Activated CD4-positive, alpha-beta memory T cell treated with anti-CD3 and anti-CD28 coated beads for 36 hours (primary cell): ENCODE measurements at regions of chr1 and their contacts with region 1.

Region 1: DNA sequence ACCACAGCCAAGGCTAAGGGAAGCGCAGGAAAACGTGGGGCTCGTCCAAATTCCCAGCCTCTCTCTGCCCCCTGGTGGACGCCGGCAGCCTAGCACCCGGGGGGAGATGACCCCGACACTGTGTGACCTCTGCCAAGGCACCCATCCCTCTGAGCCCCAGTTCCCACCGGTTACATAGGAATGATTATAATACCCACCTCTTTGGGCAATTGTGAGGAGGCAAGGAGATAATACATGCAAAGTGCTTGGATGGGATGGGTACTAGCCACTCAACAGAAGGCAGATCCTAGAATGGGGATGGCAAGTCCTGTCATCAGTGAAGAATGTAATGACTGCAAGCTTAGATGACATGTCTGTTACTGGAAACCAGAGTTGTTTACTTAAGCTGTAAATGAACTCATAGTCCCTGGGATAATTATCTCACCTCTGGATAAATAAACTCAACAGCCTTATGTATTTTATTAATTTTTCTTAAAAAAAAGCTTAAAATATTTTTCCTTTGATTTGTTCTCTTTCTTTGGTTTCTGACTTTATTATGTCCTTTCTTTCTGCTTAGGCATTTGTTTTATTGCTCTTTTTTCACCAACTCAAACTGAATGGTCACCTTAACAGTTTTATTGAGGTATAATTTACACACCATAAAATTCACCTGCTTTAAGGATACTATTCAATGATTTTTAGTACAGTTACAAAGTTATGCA is 11.3 kb upstream of the BMP8B start:
- DNase-seq: peak; percentile 80
- H3K4me3 Mint-ChIP-seq: peak overlapping the region; percentile 67
- H3K27ac Mint-ChIP-seq: peak overlapping the region; percentile 91
- H3K4me1 Mint-ChIP-seq: peaks cover 17% of the 10 kb centered on the region
- H3K27me3 Mint-ChIP-seq: no peaks in the 10 kb centered on the region

Region 2: GRCh38 chr1:39666772-39667171 is 133.1 kb before region 1 on chr1:
- CTCF ChIA-PET with region 1: interaction called, 11 read pairs
- POLR2A ChIA-PET with region 1: interaction called, 4 read pairs
- intact Hi-C with region 1: loop called (anchors 2 kb)
- DNase-seq: peak; percentile 71
- H3K4me3 Mint-ChIP-seq: no peak overlapping the region
- H3K27ac Mint-ChIP-seq: peak overlapping the region; percentile 47
- H3K4me1 Mint-ChIP-seq: peaks cover 20% of the 10 kb centered on the region
- H3K27me3 Mint-ChIP-seq: peaks cover 27% of the 10 kb centered on the region

Region 3: GRCh38 chr1:39672551-39672947 is 127.4 kb before region 1 on chr1:
- CTCF ChIA-PET with region 1: interaction called, 11 read pairs
- POLR2A ChIA-PET with region 1: interaction called, 4 read pairs
- intact Hi-C with region 1: loop called (anchors 2 kb)
- DNase-seq: peak; percentile 54
- H3K4me3 Mint-ChIP-seq: peak overlapping the region; percentile 36
- H3K27ac Mint-ChIP-seq: no peak overlapping the region
- H3K4me1 Mint-ChIP-seq: peaks cover 3% of the 10 kb centered on the region
- H3K27me3 Mint-ChIP-seq: peaks cover 25% of the 10 kb centered on the region

Region 4: DNA sequence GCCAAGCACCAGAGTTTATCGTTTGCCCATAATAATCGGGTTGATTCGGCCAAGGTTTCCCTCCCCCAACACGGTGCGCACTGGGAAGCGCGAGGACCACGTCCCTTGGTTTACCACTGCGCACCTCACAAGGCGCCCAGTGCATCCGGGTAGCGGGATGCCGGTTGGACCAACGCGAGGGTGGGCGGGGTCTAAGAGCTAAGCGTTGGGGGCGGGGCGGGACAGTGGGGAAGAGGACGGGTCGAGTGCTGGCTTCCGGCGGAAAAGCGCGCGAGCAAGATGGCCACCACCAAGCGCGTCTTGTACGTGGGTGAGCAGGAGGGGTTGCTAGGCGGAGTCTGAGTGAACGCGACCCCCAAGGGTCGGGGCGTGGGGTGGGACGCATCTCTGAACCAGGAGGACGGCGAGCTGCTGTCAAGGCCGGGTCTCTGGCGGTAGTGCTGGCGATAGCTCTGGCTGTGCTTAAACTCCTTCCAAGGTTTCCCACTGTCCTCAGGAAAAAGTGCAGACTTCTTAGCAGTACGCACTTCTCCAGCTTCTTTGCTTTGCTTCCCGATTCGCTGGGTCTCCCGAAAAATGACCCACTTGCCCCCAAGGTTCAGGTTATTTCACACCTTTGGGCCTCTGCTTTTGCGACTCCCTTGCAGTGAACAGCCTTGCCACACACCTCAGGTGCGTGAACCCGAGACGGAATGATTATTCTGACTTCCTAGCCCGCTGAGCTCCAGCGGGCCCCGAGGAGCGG is 61.1 kb before region 1 on chr1 and contains the start of gene PPIE:
- CTCF ChIA-PET with region 1: interaction called, 21 read pairs
- POLR2A ChIA-PET with region 1: interaction called, 3 read pairs
- intact Hi-C with region 1: loop called (anchors 2 kb)
- DNase-seq: peak; percentile 98
- H3K4me3 Mint-ChIP-seq: peak within 1 kb of the TSS; percentile 97
- H3K27ac Mint-ChIP-seq: peak within 1 kb of the TSS; percentile 88
- H3K4me1 Mint-ChIP-seq: peaks cover 34% of the 10 kb centered on the region
- H3K27me3 Mint-ChIP-seq: peaks cover 10% of the 10 kb centered on the region
- total RNA-seq, gene PPIE: 64.1 to 68.7 TPM

Region 5: DNA sequence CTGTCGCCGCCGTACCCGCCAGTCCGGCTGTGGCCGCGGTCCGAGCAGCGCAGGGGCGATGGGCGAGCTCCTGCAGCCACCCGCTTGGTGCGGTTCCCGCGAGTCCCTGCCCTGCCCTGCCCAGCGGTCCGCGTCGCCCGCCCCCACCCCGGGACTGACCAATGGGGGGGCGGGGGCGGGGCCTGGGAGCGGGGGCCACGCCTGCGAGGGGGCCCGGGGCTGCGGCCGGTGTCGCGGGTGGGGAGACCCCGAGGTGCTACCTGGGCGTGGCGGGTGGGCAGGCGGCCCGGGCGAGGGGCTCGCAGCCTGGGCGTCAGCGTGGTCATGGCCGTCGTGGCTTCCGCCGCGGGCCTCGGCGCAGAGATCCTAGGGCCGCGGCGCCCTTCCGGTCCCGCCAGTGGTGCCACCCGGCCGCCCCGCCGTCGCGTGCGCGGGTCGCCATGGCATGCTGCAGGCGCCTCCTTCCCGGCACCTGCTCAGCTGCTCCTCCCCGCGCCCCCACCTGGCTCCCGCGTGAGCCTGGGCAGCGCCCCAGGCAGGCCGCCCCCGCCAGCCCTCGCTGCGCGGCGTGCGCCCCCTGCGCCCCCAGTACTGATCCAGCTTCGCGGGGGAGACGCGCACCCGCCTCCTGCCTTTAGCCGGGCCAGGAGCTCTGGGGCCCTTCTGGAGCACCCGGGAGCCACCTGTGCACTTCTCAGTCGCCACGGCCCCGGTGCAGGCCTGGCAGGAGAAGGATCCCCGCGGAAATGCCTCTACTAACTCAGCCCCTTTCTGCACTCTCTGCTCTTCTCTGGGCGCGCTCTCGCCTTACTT is 11.0 kb before region 1 on chr1 and contains the start of gene BMP8B:
- CTCF ChIA-PET with region 1: interaction called, 12 read pairs
- POLR2A ChIA-PET with region 1: interaction called, 15 read pairs
- intact Hi-C with region 1: no loop called
- DNase-seq: peak; percentile 60
- H3K4me3 Mint-ChIP-seq: peak within 1 kb of the TSS; percentile 68
- H3K27ac Mint-ChIP-seq: no peak within 1 kb of the TSS
- H3K4me1 Mint-ChIP-seq: peaks cover 13% of the 10 kb centered on the region
- H3K27me3 Mint-ChIP-seq: peaks cover 11% of the 10 kb centered on the region
- total RNA-seq, gene BMP8B: 0.53 to 0.55 TPM

Region 6: GRCh38 chr1:39816415-39817090 is 16.6 kb after region 1 on chr1:
- CTCF ChIA-PET with region 1: interaction called, 15 read pairs
- POLR2A ChIA-PET with region 1: no interaction called
- intact Hi-C with region 1: no loop called
- DNase-seq: peak; percentile 73
- H3K4me3 Mint-ChIP-seq: no peak overlapping the region
- H3K27ac Mint-ChIP-seq: no peak overlapping the region
- H3K4me1 Mint-ChIP-seq: peaks cover 16% of the 10 kb centered on the region
- H3K27me3 Mint-ChIP-seq: peaks cover 7% of the 10 kb centered on the region